Ascending aorta (tissue), 2 donors: ENCODE measurements at regions of chr1 and their contacts with region 1.

Region 1: DNA sequence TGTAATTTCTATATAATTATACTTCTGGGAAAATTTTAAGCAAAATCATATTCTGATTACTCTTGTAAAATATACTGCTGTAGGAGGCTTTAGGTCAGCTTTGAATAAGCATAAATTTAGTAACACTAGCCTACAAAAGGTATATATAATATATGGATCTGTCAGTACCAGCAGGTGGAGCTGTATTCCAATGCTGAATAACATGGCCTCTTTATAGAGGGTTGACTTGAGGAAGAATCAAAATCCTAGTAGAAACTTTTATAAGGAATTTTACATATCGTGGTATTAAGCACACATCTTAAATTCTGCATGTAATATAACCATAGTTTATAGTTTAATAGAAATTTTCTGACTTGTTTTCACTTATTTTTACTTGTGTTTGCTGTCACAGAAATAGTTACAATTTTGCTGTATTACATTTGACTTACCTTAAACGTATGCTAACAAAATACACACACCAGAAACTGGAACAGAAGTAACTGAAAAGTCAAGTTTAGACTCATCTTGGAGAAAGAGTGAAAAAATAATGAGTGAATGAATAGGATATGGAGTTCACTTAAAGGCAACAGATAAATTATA is 79.3 kb downstream of the HMCN1 start:
- DNase-seq: no peak
- H3K4me3 ChIP-seq: no peak overlapping the region
- H3K27ac ChIP-seq: no peak overlapping the region
- H3K4me1 ChIP-seq: peaks cover 0 to 8% of the 10 kb centered on the region in 2 donors
- H3K27me3 ChIP-seq: no peaks in the 10 kb centered on the region
- CTCF ChIP-seq: peak; percentile 26 to 58 (median 34)

Region 2: DNA sequence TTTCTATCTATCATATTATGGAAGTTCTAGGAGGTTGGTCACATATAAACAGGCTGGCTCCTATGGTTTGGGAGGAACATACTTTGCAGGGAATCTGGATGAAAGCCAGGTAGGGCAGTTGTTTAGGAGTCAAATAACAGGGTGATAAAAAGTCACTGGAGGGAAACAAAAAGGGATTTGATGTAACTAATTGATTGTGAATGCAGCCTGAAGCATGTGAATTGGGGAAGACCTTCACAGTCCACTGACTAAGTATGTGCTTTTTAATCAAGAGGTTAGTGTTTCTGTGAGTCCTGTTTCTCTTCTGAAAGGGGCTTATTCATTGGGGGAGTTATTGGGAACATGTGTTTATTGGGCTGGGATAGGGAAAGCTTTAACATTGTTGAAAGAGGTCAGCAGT is 38.0 kb before region 1 on chr1:
- intact Hi-C with region 1: no loop called
- DNase-seq: no peak
- H3K4me3 ChIP-seq: no peak overlapping the region
- H3K27ac ChIP-seq: no peak overlapping the region
- H3K4me1 ChIP-seq: no peaks in the 10 kb centered on the region
- H3K27me3 ChIP-seq: no peaks in the 10 kb centered on the region
- CTCF ChIP-seq: no peak

Region 3: GRCh38 chr1:185843297-185843869 is 29.9 kb after region 1 on chr1:
- intact Hi-C with region 1: no loop called
- DNase-seq: no peak
- H3K4me3 ChIP-seq: no peak overlapping the region
- H3K27ac ChIP-seq: no peak overlapping the region
- H3K4me1 ChIP-seq: peaks cover 4 to 18% of the 10 kb centered on the region in 2 donors
- H3K27me3 ChIP-seq: no peaks in the 10 kb centered on the region
- CTCF ChIP-seq: no peak

Region 4: GRCh38 chr1:185853739-185854138 is 40.2 kb after region 1 on chr1:
- intact Hi-C with region 1: loop called (anchors 5 kb)
- DNase-seq: no peak
- H3K4me3 ChIP-seq: no peak overlapping the region
- H3K27ac ChIP-seq: peak overlapping the region; percentile 6 to 44
- H3K4me1 ChIP-seq: peaks cover 0 to 8% of the 10 kb centered on the region in 2 donors
- H3K27me3 ChIP-seq: no peaks in the 10 kb centered on the region
- CTCF ChIP-seq: no peak